Activated CD4-positive, alpha-beta memory T cell treated with anti-CD3 and anti-CD28 coated beads for 36 hours (primary cell): ENCODE measurements at regions of chr19 and their contacts with region 1.

Region 1: DNA sequence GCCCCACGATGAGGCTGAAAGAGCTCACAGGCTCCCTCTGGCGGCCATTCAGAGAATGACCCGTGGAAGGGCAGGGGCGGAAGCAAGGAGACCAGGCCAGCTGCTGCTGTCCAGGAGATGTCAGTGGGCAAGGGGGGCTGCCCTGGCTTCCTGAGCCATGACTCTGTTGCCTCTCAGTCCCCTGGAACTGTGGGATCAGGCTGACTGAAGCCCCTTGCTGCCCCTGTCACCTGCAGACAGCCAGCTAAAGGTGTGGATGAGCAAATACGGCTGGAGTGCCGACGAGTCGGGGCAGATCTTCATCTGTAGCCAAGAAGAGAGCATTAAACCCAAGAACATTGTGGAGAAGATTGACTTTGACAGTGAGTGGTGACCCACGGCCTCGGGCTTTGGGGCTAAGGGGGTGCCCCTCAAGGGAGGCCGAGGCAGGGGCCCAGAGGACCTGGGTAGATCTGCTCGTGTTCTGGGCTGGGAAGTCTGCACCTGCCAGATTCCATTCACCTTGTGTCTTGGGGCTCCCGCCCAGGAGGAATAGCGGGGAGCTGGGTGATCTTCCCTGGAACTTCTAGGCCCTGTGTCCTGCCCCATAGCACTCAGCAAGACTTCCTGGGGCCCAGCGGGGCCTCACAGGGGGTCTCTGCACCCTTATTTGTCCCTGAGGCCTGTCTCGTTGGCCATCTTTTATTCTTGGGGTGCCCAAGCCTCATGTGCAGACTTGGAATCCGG is 12.5 kb upstream of the ACTN4 start:
- DNase-seq: peak; percentile 83
- H3K4me3 Mint-ChIP-seq: no peak overlapping the region
- H3K27ac Mint-ChIP-seq: peak overlapping the region; percentile 81
- H3K4me1 Mint-ChIP-seq: peaks cover 30% of the 10 kb centered on the region
- H3K27me3 Mint-ChIP-seq: no peaks in the 10 kb centered on the region

Region 2: GRCh38 chr19:38374429-38375176 is 260.3 kb before region 1 on chr19 and contains the start of gene PSMD8:
- CTCF ChIA-PET with region 1: no interaction called
- POLR2A ChIA-PET with region 1: no interaction called
- intact Hi-C with region 1: no loop called
- DNase-seq: peak; percentile 99
- H3K4me3 Mint-ChIP-seq: peak within 1 kb of the TSS; percentile 86
- H3K27ac Mint-ChIP-seq: peak within 1 kb of the TSS; percentile 87
- H3K4me1 Mint-ChIP-seq: peaks cover 22% of the 10 kb centered on the region
- H3K27me3 Mint-ChIP-seq: no peaks in the 10 kb centered on the region
- total RNA-seq, gene PSMD8: 214 to 224 TPM

Region 3: DNA sequence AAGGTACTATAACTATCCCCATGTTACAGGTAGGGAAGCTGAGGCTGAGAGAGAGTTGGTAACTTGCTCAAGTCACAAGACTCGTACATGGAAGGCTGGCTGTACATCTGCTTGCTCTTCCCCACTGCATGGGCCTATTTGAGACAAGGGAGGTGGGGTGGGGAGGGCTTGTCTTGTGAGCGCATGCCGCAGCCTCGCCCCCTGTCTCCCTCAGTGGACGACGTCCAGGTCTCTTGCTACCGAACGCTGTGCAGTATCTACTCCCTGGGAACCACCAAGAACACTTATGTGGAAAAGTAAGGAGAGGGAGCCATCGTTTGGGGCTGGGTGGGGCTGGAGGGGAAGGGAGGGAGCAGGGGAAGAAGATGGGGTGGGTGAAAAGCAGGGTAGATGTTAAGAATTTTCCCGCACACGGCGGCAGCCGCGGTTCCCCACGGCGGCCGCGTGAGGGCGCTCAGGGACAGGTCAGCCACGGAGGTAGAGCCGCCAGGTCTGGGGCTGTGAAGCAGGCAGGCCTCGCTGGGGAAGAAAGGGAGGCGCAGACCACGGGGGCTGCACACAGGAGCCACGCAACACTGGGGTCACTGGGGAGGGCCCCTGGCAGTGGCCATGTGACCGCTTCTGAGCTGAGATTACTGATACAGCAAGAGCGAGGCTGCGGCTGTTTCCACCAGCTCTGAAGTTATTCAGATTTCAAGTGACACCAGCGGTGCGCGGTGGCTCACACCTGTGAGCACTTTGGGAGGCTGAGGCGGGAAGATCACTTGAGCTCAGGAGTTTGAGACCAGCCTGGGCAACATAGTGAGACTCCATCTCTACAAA is 119.9 kb before region 1 on chr19:
- CTCF ChIA-PET with region 1: interaction called, 63 read pairs
- POLR2A ChIA-PET with region 1: no interaction called
- intact Hi-C with region 1: loop called (anchors 1 kb)
- DNase-seq: peak; percentile 86
- H3K4me3 Mint-ChIP-seq: no peak overlapping the region
- H3K27ac Mint-ChIP-seq: peak overlapping the region; percentile 33
- H3K4me1 Mint-ChIP-seq: peaks cover 22% of the 10 kb centered on the region
- H3K27me3 Mint-ChIP-seq: no peaks in the 10 kb centered on the region

Region 4: GRCh38 chr19:38559428-38560401 is 75.2 kb before region 1 on chr19:
- CTCF ChIA-PET with region 1: interaction called, 8 read pairs
- POLR2A ChIA-PET with region 1: no interaction called
- intact Hi-C with region 1: loop called (anchors 1 kb)
- DNase-seq: peak; percentile 77
- H3K4me3 Mint-ChIP-seq: peak overlapping the region; percentile 49
- H3K27ac Mint-ChIP-seq: peak overlapping the region; percentile 88
- H3K4me1 Mint-ChIP-seq: peaks cover 58% of the 10 kb centered on the region
- H3K27me3 Mint-ChIP-seq: peaks cover 3% of the 10 kb centered on the region

Region 5: GRCh38 chr19:38647368-38647965 is 12.5 kb after region 1 on chr19 and contains the start of gene ACTN4:
- CTCF ChIA-PET with region 1: interaction called, 15 read pairs
- POLR2A ChIA-PET with region 1: no interaction called
- intact Hi-C with region 1: loop called (anchors 1 kb)
- DNase-seq: peak; percentile 100
- H3K4me3 Mint-ChIP-seq: peak within 1 kb of the TSS; percentile 94
- H3K27ac Mint-ChIP-seq: peak within 1 kb of the TSS; percentile 53
- H3K4me1 Mint-ChIP-seq: peaks cover 36% of the 10 kb centered on the region
- H3K27me3 Mint-ChIP-seq: no peaks in the 10 kb centered on the region
- total RNA-seq, gene ACTN4: 267 to 270 TPM

Region 6: GRCh38 chr19:38831142-38831605 is 196.3 kb after region 1 on chr19:
- CTCF ChIA-PET with region 1: interaction called, 11 read pairs
- POLR2A ChIA-PET with region 1: no interaction called
- intact Hi-C with region 1: no loop called
- DNase-seq: peak; percentile 65
- H3K4me3 Mint-ChIP-seq: peak overlapping the region; percentile 79
- H3K27ac Mint-ChIP-seq: peak overlapping the region; percentile 88
- H3K4me1 Mint-ChIP-seq: peaks cover 21% of the 10 kb centered on the region
- H3K27me3 Mint-ChIP-seq: no peaks in the 10 kb centered on the region